MCF 10A (cell line): ENCODE measurements at regions of chr19 and their contacts with region 1.

Region 1: GRCh38 chr19:17226002-17226933 is at the start of gene OCEL1:
- DNase-seq: peak; percentile 99
- H3K4me3 Mint-ChIP-seq: peak within 1 kb of the TSS; percentile 93
- H3K27ac Mint-ChIP-seq: peak within 1 kb of the TSS; percentile 83
- H3K4me1 Mint-ChIP-seq: no peaks in the 10 kb centered on the region
- H3K27me3 Mint-ChIP-seq: no peaks in the 10 kb centered on the region
- CTCF ChIP-seq: no peak
- total RNA-seq, gene OCEL1: 13.7 and 14.3 TPM in 2 replicates

Region 2: DNA sequence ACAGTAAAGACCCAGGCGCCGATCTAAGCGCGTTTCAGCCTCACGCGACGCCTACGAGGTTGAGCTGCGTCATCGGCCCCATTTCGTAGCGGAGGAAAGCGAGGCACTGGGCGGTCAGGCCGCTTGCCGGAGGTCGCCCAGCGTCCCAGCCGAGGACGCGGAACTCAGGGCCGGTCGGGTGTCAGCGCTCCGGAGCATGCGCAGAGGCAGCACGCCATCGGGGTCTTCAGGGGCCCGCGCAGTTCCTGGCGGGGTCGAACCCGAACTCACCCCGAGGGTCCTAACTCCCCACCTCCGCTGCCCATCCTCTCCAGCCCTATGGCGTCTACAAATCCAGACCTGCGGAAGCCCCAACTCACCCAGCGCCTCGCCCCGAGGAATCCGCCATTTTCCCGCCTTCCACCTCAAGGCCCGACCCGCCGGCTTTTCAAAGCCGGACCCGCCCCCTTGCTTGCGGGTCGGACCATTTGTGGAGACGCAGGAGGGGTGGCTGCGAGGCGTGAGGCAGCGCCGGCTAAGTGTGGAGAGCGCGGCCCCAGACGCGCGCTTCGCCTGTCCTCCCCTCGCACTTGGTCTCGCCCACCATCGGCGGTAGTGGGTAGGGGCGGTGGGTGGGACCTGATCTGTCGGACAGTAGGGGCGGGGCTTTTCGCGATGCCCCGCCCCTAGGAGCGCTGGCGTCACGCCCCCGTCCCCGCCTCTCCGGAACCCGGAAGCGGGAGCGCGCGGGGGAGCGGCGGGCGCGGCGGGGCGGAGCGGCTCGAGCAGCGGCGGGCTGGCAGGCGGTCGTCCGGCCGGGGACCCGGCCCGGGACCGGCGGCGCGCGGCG is 151.0 kb before region 1 on chr19 and contains the starts of genes HAUS8 and MYO9B:
- CTCF ChIA-PET with region 1: interaction called, 3 read pairs
- POLR2A ChIA-PET with region 1: interaction called, 9 read pairs
- intact Hi-C with region 1: loop called (anchors 10 kb)
- DNase-seq: peak; percentile 99
- H3K4me3 Mint-ChIP-seq: peak within 1 kb of the TSS; percentile 95
- H3K27ac Mint-ChIP-seq: peak within 1 kb of the TSS; percentile 88
- H3K4me1 Mint-ChIP-seq: peaks cover 38% of the 10 kb centered on the region
- H3K27me3 Mint-ChIP-seq: no peaks in the 10 kb centered on the region
- CTCF ChIP-seq: no peak
- total RNA-seq, gene HAUS8: 6.6 and 8.4 TPM in 2 replicates
- total RNA-seq, gene MYO9B: 43.5 and 49.5 TPM in 2 replicates

Region 3: DNA sequence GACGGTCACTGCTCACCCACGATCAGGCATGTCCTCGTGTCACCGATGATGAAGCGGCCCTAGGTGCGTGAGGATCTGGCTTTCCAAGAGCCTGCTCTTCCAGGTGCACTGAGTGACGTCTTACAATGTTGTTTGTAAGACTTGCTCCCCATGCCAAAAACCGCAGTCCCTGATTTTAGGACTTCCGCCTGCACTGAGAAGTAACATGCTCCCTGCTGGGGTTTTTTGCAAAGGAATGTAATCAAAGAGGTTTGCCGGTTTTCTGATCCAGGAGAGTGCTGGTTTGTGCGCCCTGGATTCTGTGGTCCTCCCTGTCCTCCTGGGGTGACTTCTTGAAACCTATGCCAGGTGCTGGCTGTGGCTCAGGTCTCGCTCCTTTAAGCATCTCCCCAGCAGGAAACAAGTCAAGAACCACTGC is 111.8 kb before region 1 on chr19:
- CTCF ChIA-PET with region 1: no interaction called
- POLR2A ChIA-PET with region 1: no interaction called
- intact Hi-C with region 1: no loop called
- DNase-seq: peak; percentile 52
- H3K4me3 Mint-ChIP-seq: peak overlapping the region; percentile 30
- H3K27ac Mint-ChIP-seq: peak overlapping the region; percentile 36
- H3K4me1 Mint-ChIP-seq: peaks cover 20% of the 10 kb centered on the region
- H3K27me3 Mint-ChIP-seq: no peaks in the 10 kb centered on the region
- CTCF ChIP-seq: no peak

Region 4: DNA sequence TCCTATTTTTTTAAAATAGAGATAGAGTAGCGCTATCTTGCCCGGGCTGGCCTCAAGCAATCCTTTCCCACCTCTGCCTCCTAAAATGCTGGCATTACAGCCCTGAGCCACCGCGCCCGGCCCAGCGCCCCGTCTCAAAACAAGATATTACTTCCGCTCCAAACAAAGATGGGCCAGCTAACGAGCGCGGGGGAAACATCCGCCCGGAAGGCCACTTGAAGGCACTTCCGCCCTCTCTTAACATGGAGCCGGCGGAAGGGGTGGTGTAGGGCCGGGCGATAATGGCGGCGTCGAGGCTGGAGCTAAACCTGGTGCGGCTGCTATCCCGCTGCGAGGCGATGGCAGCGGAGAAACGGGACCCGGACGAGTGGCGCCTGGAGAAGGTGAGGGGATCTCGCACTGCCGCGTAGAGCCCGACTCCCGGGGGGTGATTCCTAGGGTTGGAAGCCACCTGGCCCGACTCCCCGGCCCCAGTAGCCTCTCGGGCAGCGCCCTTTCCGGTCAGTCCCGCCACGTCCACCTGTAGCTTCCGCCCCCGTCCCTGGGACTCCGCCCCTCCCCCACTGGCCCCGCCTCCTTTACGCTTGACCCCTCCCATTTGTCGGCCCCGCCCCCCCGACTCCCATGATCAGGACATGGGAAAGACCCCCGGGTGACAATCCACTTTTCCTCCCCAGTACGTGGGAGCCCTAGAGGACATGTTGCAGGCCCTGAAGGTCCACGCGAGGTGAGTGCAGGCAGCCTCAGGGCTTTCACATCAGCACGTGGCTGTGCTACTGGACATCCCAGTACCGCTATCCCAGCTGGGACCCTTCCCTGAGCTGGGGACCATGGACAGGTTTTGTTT is 10.9 kb before region 1 on chr19 and contains the start of gene USE1:
- CTCF ChIA-PET with region 1: interaction called, 4 read pairs
- POLR2A ChIA-PET with region 1: interaction called, 36 read pairs
- intact Hi-C with region 1: no loop called
- DNase-seq: peak; percentile 95
- H3K4me3 Mint-ChIP-seq: peak within 1 kb of the TSS; percentile 80
- H3K27ac Mint-ChIP-seq: peak within 1 kb of the TSS; percentile 98
- H3K4me1 Mint-ChIP-seq: no peaks in the 10 kb centered on the region
- H3K27me3 Mint-ChIP-seq: no peaks in the 10 kb centered on the region
- CTCF ChIP-seq: no peak
- total RNA-seq, gene USE1: 29.9 and 47.9 TPM in 2 replicates

Region 5: DNA sequence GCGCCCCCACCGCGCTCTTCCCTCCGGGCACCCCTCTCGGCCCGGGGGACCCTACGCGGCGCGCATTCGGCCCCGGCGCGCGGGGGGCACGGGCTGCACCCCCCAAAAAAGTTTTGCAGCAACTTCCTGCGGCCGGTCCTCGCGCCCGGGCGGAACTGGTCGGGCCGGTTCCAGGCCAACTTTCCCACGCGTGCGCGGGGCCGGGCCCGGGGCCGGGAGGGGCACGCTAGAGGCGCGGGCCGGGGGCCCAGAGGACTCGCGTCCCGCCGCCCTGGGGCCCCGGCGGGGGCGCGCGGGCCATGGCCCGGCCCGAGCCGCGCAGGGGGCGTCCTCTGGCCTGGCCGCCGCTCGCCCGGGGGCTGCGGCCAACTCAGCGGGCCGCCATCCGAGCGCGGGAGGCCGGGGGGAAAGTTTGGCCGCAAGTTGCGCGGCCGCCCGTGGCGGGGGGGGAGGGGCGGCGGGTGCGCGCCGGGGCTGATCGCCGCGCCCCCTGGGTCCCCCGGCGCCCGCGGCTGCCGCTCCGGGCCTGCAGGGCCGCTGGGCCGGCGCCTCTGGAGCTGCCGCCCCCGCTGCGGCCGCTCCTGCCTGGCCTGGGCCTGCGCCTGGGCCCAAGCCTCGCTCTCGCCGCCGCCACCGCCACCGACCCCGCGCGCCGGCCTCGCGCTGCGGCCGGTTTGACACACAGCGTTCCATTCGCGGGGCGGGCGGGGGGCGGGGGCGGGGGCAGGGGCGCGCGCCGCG is 19.1 kb after region 1 on chr19 and contains the start of gene NR2F6:
- CTCF ChIA-PET with region 1: interaction called, 4 read pairs
- POLR2A ChIA-PET with region 1: interaction called, 34 read pairs
- intact Hi-C with region 1: no loop called
- DNase-seq: no peak
- H3K4me3 Mint-ChIP-seq: peak within 1 kb of the TSS; percentile 89
- H3K27ac Mint-ChIP-seq: peak within 1 kb of the TSS; percentile 93
- H3K4me1 Mint-ChIP-seq: peaks cover 38% of the 10 kb centered on the region
- H3K27me3 Mint-ChIP-seq: no peaks in the 10 kb centered on the region
- CTCF ChIP-seq: no peak
- total RNA-seq, gene NR2F6: 32.8 and 36.3 TPM in 2 replicates

Region 6: DNA sequence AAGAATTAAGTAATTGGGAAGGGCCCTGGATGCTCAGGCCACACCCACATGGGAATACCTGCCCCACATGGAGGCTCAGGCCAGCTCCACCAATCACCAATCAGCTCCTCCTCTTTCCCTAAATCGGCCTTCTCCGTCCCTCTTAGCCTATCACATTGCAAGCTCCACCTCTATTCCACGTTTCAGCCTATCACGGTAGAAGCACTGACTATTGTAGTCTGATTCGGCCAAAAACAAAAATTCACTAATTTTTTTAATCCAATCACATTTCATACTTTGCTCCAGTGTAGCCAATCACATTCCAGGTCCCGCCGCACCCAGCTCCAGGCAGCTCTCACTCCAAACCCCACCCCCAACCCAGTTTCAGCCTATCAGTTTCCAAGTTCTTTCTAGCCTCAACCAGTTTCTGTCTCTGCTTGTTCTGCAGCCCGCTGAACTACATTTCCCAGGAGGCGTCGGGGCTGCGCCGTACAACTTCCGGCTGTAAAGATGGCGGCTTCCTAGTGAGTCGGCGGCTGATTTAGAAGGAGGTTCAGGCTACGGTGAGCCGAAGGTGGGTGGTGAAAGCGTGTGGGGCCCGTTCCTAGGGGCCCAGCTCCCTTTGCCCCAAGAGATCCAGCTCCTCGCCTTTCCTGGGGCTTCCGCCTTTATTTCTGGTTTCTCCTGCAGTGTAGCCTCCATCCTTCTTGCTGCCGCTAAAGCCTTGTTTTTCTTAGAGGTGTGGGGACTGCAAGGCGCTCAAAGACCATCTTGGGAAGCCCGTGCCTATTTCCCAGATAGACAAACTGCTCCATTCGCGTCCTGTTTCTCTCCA is 40.9 kb after region 1 on chr19 and contains the start of gene BABAM1:
- CTCF ChIA-PET with region 1: no interaction called
- POLR2A ChIA-PET with region 1: interaction called, 21 read pairs
- intact Hi-C with region 1: no loop called
- DNase-seq: peak; percentile 99
- H3K4me3 Mint-ChIP-seq: peak within 1 kb of the TSS; percentile 84
- H3K27ac Mint-ChIP-seq: peak within 1 kb of the TSS; percentile 93
- H3K4me1 Mint-ChIP-seq: peaks cover 6% of the 10 kb centered on the region
- H3K27me3 Mint-ChIP-seq: no peaks in the 10 kb centered on the region
- CTCF ChIP-seq: no peak
- total RNA-seq, gene BABAM1: 96.1 and 104 TPM in 2 replicates